ENCODE measurements at regions of chr15 and their contacts with region 1.

Region 1: DNA sequence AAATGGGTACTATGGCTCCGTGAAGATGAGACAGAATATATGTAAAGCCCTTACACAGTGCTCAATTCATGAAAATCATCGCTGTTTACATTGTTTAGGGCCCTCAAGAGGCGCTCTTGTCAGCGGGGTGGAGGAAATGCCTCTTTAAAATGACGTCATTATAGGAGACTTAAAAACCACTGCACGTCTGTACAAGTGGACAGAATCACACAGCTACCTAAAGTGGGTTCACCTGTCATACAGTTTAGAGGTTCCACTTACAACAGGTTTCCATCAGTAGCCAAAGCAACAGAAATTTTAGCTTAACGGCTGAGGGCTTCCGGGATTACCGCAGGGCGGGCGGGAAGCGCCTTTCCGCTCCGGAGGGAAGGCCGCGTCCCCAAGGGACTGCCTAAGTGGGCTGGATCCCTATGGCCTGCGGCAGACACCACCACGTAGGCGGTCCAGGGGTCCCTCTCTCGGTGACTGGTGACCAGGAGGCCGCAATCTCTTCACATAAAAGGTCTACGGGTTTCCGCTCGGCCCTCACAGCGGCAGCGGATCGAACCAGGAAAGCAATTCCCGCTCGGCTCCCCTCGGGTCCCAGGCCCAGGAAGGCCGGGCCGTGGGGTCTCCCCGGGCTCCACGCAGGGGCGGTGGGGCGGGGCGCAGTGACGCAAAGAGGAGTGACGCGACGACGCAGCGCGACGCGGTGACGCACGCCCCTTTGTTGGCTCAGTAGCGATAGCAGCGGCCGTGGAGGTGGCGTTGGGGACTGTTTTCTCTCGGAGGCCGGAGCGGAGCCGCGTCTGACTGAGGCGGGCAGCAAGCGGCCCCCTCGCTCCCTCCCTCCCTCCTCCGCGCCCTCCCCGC is at the start of gene ARIH1:
- DNase-seq: peak; percentile 95
- H3K4me3 Mint-ChIP-seq: peak within 1 kb of the TSS; percentile 95
- H3K27ac Mint-ChIP-seq: peak within 1 kb of the TSS; percentile 99
- H3K4me1 Mint-ChIP-seq: peaks cover 31% of the 10 kb centered on the region
- H3K27me3 Mint-ChIP-seq: no peaks in the 10 kb centered on the region
- total RNA-seq, gene ARIH1: 139 and 141 TPM in 2 replicates

Region 2: DNA sequence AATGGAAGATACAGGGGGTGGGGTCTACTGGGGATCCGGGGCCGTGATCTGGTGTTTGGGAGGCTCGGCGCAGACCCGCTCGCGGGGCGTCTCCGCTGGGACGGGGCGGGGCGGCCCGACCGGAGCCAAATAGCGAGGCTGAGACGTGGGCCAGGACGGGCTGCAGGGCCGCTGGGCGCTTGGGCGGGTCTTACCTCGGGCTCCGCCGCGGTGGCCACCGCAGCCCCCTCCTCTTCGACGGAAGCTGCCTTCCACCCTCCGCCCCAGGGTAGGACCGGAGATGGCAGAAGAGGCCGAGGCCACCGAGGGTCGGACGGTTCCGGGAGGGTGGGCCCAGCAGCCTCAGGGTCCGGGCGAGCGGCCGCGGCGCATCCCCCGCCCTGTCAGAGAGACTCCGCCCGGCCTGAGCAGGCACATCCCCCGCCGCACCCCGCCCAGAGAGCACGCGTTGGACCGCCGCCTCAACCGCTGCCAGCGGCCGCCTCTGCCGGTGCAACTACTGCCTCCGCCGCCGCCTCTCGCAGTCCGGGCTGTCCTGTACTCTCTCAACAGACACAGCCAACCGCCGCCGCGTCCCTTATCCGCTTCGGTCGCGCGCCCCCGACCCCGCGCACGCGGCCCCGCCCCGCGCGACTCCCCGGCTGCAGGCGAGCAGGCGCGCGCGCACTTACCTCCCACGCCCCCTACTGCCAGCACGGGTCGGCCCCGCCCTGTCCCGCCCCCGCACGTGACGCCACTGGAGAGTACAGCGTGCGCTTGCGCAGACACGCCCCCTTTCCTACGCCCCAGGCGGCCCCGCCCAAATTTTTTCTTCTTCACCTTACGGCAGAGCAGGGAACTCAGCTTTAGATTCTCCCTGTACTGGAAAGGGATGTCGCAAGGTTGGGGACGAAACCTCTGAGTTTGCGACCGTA is 356.1 kb before region 1 on chr15 and contains the start of gene MYO9A:
- intact Hi-C with region 1: loop called (anchors 5 kb)
- DNase-seq: peak; percentile 95
- H3K4me3 Mint-ChIP-seq: peak within 1 kb of the TSS; percentile 90
- H3K27ac Mint-ChIP-seq: peak within 1 kb of the TSS; percentile 97
- H3K4me1 Mint-ChIP-seq: peaks cover 30% of the 10 kb centered on the region
- H3K27me3 Mint-ChIP-seq: peaks cover 8% of the 10 kb centered on the region
- total RNA-seq, gene MYO9A: 25.1 and 26.2 TPM in 2 replicates

Region 3: GRCh38 chr15:72375847-72376581 is 97.8 kb before region 1 on chr15 and contains the start of gene HEXA:
- intact Hi-C with region 1: loop called (anchors 1 kb)
- DNase-seq: peak; percentile 96
- H3K4me3 Mint-ChIP-seq: peak within 1 kb of the TSS; percentile 89
- H3K27ac Mint-ChIP-seq: peak within 1 kb of the TSS; percentile 91
- H3K4me1 Mint-ChIP-seq: peaks cover 27% of the 10 kb centered on the region
- H3K27me3 Mint-ChIP-seq: peaks cover under 1% of the 10 kb centered on the region
- total RNA-seq, gene HEXA: 58.2 and 63.4 TPM in 2 replicates

Measured in activated T-helper 2 cell treated with anti-CD3 and anti-CD28 coated beads, Interferon-gamma antibody, Interleukin-2, Interleukin-4, amounts not matched to agents 10 μg/mL and 5 μg/mL and 100 μg/mL, durations not matched to agents 14 hours and 24 hours and 36 hours (primary cell).